Posterior vena cava (tissue), 2 donors: ENCODE measurements at regions of chr16 and their contacts with region 1.

Region 1: DNA sequence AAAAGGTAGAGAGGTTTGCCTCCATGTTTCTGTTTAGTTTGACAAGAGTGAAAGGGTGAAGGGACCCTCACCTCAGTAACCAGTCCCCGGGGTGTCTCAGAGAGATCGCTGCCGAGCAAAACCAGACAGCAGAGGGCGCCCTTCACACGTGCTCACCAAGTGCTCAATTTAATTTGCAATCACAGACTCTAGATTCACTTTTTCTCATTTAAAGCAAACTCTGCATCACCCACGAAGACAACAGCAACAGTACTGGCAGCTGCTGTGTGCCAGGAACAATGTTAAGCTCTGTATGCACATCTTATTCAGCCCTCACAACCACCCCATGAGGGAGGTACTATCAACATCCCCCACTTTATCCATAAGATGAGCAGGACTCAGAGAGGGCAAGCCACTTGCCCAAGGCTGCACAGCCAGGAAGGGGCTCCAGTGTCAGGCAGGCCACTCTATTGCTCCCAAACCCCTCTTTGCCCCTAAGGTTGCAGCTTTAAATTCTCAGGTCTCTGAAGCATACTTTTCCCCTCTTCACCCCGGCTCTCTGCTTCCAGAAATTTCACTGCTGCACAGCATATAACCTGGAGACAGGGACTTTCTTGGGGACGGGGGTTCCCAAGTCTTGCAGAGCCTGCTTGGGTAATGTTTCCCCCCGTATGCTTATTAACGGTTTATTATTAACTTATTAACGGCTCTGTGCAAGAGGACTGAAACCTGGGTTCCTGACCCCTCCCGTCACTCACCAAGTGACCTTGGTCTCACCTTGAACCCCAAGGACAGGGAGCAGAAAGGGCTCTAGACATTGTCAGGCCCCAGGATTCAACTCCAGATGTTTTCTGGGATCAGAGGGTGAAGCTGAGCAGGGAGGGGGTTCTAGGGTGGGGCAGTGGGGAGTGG is 70.9 kb downstream of the CNGB1 start:
- DNase-seq: peak; percentile 92

Region 2: DNA sequence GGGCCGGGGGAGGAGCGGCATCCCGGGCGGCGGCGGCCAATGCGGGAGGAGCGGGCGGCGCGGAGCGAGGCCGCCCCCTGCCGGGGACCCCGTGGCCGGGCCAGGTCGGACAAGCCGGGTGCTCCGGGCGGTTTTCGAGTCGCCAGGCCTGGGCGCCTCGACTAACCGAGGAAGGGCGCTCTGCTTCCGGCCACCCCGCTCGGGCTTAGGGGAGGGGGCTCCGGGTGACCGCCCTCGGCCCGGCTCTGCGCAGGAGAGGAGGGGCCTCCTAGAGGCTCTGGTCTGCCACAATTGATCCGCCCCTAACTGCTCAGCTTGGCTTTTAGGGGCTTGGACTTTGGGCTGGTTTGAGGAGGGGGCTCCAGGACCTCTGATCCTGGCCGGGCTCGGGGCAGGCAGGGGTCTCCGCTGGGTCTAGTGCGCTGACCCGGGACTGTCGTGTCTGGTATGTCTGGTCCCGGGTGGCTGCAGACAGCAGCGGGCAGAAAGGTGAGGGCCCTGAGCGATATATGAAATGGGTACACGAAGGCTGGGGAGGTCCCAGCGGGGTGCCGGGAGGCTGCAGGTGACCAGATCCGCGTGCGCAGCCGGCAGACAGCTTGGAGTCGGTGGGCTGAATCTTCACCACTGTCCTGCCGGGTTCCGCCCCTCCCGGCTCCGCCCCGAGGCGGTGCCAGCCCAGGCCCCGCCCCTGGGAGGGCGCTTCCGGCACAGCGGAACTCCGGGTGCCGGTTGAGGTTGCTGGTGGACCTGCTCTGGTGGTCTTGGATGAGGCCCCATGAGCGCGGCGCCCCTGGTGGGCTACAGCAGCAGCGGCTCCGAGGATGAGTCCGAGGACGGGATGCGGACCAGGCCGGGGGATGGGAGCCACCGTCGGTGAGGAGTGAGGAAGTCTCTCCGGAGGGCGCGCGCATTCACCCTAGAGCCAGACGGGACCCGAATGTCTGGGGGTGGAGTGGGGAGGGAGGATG is 101.0 kb after region 1 on chr16 and contains the start of gene USB1:
- intact Hi-C with region 1: loop called in 1 of 2 experiments (anchors 5 kb)
- DNase-seq: peak; percentile 97
- total RNA-seq, gene USB1: 34.1 to 39.0 TPM

Region 3: DNA sequence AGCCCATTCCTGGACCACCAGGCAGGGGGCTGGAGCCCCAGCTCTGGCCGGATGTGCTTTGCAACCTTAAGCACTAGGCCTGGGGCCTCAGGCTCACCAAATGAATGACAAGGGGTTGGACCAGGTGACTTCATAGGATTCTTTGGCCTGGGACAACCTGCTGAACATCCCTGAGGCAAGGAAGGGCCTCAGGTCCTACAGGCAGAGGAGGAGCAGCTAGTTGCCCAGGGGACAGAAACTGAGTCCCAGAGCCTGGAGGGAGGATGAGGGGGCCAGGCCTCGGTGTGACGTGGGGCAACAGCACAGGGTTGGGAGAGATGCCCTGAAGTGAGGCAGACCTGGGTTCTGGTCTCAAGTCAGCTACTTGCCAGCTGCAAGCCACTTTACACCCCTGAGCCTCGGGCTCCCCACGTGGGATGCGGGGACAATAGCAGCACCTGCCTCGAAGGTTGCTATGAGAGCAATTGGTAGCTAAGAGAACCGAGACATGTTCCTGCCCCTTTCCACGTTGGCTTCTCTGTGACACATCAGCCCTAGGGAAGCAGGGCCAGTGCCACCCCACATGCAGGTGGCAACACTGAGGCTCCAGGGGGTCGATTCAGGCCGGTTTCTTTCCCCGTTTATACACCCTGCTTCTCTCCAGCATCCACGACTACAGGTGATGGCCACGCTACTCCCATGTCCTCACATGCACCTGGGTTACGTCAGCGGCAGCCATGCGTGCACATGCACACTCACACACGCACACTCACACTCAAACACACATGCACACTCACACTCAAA is 186.6 kb after region 1 on chr16:
- intact Hi-C with region 1: no loop called
- DNase-seq: peak; percentile 60

Region 4: DNA sequence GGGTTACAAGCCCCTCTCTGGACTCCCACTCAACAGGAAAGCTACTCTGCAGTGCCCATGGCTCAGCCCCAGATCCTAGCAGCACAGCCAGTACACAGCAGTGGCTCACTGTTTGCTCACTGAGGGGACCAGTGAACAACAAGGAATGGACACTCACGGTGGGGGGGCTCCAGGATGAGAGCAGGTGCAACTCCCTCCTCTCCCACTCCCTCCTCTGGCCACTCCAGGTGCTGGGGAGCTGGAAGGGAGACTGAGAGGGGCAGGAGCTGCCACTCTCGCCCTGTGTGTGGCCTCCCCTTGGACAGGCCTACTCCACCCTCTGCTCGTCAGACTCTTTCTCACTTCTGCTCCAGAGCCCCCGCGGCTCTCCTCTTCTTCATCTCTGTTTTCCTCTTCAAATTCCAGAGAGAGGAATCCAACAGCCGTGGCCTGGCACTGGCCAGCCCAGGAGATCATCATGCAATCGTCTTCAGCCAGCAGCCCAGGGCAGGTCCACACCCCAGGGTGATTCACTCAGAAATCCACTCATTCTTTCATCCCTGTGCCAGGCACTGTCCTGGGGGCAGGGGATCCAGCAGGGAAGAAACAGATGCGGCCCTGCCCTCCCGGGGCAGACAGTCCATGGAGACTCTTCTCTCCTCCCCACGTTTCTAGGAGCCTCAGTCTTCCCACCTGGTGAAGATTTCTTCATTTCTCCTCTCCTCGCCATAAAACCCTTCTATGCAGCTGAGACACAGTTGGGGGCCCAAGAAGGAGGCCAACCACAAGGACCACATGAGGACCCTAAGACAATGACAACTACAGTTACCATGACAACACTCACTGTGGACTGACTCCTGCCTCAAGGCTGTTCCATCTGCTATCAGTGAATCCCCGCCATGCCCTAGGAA is 198.4 kb after region 1 on chr16:
- intact Hi-C with region 1: no loop called
- DNase-seq: peak; percentile 50